Endothelial cell of umbilical vein (primary cell): ENCODE measurements at regions of chr10 and their contacts with region 1.

Region 1: DNA sequence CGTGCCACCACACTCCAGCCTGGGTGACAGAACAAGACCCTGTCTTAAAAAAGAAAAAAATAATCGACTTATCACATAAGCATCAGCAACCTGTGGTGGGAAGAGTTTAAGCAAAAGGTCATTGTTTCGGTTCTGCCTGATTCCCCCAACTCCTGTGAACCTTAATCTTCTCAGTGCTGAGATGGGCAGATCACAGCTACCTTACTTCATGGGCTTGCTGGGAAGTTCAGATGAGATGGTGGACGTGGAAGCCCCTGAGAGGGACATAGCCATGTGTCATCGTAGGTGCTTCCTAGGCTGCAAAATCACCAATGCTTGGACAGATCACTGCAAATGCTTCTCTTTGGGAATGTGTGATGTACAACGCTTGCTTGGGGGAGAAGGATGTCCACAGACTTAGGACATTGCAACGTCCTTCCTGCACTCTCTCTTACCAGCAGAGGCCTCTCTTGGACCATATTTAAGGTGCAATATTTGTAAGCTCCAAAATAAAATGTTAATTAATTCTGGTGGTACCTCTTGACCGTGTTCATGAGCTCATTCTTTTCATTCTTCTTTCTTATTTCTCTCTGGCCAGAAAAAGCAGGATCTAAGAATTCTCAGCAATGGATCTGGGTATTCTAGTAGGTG is 8.6 kb downstream of the GJD4 start:
- DNase-seq: peak; percentile 44
- H3K4me3 ChIP-seq: no peak overlapping the region
- H3K27ac ChIP-seq: no peak overlapping the region
- H3K4me1 ChIP-seq: no peaks in the 10 kb centered on the region
- H3K27me3 ChIP-seq: peaks cover 19 to 22% of the 10 kb centered on the region in 2 experiments
- CTCF ChIP-seq: peak; percentile 30 to 46
- POLR2A ChIP-seq: no peak

Region 2: GRCh38 chr10:35598384-35598783 is 15.3 kb before region 1 on chr10:
- CTCF ChIA-PET with region 1: interaction called, 31 read pairs
- POLR2A ChIA-PET with region 1: no interaction called
- dilution Hi-C with region 1: no loop called
- intact Hi-C with region 1: no loop called
- DNase-seq: peak; percentile 12
- H3K4me3 ChIP-seq: no peak overlapping the region
- H3K27ac ChIP-seq: no peak overlapping the region
- H3K4me1 ChIP-seq: no peaks in the 10 kb centered on the region
- H3K27me3 ChIP-seq: peaks cover 0 to 8% of the 10 kb centered on the region in 2 experiments
- CTCF ChIP-seq: peak; percentile 22 to 41
- POLR2A ChIP-seq: no peak

Region 3: DNA sequence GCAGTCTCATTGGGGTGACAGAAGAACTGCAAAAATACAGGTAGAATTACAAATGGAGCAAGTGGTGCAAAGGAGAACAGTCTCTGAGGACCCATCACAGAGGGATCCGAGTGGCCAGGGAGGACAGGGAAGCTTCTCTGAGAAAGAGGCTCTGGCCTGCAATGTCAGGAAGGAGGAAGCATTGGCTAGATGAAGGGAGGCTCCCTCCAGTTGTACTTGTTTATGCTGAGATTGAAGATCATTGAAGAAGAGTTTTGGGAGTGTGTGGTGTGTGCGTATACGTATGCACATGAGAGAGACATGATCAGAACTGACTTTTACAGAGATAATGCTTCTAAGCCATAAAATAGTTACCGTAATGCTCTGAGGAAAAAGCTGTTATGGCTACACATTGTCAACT is 303.1 kb after region 1 on chr10:
- CTCF ChIA-PET with region 1: interaction called, 17 read pairs
- POLR2A ChIA-PET with region 1: no interaction called
- dilution Hi-C with region 1: no loop called
- intact Hi-C with region 1: no loop called
- DNase-seq: no peak
- H3K4me3 ChIP-seq: no peak overlapping the region
- H3K27ac ChIP-seq: no peak overlapping the region
- H3K4me1 ChIP-seq: peaks cover 20% of the 10 kb centered on the region
- H3K27me3 ChIP-seq: no peaks in the 10 kb centered on the region
- CTCF ChIP-seq: peak in 1 of 2 donors; percentile 20
- POLR2A ChIP-seq: no peak

Region 4: DNA sequence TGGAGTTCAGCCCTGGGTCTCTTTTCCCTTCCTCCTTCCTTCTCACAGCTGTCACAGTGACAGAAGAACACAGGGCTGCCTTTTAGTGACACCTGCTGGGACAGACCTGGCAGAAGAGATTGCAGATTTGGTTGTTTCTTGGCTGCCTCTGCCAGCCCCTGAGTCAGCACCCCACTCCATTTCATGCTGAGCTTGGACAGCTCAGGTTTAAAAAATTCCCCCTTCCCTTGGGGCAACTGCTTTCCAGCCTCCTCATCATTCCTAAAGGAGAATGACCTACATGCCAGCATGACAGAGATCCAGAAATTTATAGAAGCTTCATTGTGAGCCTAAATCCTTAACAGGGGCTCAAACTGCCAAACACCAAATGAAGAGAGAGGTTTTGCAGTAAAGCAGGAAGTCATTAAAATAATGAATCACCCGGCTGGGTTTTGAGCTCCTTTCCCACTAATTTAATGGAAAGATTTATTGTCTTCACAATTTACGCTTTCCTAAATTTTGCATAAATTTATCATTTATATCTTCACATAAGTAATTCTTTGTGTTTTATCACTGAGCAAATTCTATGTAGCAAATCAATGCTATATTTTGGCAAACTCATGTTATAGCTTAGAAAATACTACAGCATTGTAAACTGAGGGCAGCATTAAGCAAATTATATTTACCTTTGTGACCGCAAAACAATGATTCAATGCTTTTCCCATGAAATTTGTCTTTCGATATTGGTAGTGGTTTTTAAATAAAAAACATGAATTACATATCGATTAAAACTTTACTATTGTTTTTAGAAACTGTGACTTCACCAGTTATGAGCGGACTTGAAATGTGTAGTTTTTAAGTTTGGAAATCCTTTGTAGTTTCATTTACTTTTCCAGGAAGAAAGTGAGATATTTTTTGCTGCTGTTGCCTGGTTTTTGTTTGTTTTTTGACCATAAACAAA is 1112.1 kb after region 1 on chr10:
- CTCF ChIA-PET with region 1: interaction called, 10 read pairs
- POLR2A ChIA-PET with region 1: no interaction called
- dilution Hi-C with region 1: no loop called
- intact Hi-C with region 1: no loop called
- DNase-seq: peak; percentile 66
- H3K4me3 ChIP-seq: no peak overlapping the region
- H3K27ac ChIP-seq: no peak overlapping the region
- H3K4me1 ChIP-seq: no peaks in the 10 kb centered on the region
- H3K27me3 ChIP-seq: peaks cover 0 to 3% of the 10 kb centered on the region in 2 experiments
- CTCF ChIP-seq: peak; percentile 7 to 37
- POLR2A ChIP-seq: no peak

Region 5: GRCh38 chr10:36771725-36772124 is 1158.0 kb after region 1 on chr10:
- CTCF ChIA-PET with region 1: interaction called, 16 read pairs
- POLR2A ChIA-PET with region 1: no interaction called
- dilution Hi-C with region 1: no loop called
- intact Hi-C with region 1: no loop called
- DNase-seq: peak; percentile 11
- H3K4me3 ChIP-seq: no peak overlapping the region
- H3K27ac ChIP-seq: no peak overlapping the region
- H3K4me1 ChIP-seq: no peaks in the 10 kb centered on the region
- H3K27me3 ChIP-seq: no peaks in the 10 kb centered on the region
- CTCF ChIP-seq: no peak
- POLR2A ChIP-seq: no peak

Region 6: GRCh38 chr10:36779234-36779846 is 1165.6 kb after region 1 on chr10:
- CTCF ChIA-PET with region 1: interaction called, 210 read pairs
- POLR2A ChIA-PET with region 1: no interaction called
- dilution Hi-C with region 1: no loop called
- intact Hi-C with region 1: no loop called
- DNase-seq: peak; percentile 87
- H3K4me3 ChIP-seq: no peak overlapping the region
- H3K27ac ChIP-seq: no peak overlapping the region
- H3K4me1 ChIP-seq: no peaks in the 10 kb centered on the region
- H3K27me3 ChIP-seq: no peaks in the 10 kb centered on the region
- CTCF ChIP-seq: peak; percentile 57 to 64
- POLR2A ChIP-seq: no peak

Region 7: DNA sequence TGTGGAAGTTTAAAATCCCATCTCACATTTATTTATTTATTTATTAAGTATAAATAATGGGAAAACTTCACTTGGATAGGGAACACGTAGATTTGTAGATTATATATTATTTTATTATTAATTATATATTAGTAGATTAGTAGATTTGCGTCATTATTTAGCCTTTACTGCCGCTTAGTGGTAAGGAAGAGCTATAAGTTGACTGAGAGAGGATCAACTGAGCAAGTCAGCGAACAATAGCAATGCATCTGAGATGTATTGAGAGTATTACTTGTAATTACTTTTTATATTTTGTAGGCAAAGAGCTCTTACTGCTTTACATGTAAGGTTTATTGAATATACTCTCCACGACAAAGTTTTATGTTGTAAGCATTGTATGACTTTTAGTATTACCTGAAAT is 1267.2 kb after region 1 on chr10:
- CTCF ChIA-PET with region 1: interaction called, 105 read pairs
- POLR2A ChIA-PET with region 1: no interaction called
- dilution Hi-C with region 1: no loop called
- intact Hi-C with region 1: no loop called
- DNase-seq: peak; percentile 20
- H3K4me3 ChIP-seq: no peak overlapping the region
- H3K27ac ChIP-seq: no peak overlapping the region
- H3K4me1 ChIP-seq: no peaks in the 10 kb centered on the region
- H3K27me3 ChIP-seq: peaks cover 0 to 4% of the 10 kb centered on the region in 2 experiments
- CTCF ChIP-seq: peak; percentile 14 to 48
- POLR2A ChIP-seq: no peak